Heart right ventricle (tissue), 16 donors: ENCODE measurements at regions of chr21 and their contacts with region 1.

Region 1: DNA sequence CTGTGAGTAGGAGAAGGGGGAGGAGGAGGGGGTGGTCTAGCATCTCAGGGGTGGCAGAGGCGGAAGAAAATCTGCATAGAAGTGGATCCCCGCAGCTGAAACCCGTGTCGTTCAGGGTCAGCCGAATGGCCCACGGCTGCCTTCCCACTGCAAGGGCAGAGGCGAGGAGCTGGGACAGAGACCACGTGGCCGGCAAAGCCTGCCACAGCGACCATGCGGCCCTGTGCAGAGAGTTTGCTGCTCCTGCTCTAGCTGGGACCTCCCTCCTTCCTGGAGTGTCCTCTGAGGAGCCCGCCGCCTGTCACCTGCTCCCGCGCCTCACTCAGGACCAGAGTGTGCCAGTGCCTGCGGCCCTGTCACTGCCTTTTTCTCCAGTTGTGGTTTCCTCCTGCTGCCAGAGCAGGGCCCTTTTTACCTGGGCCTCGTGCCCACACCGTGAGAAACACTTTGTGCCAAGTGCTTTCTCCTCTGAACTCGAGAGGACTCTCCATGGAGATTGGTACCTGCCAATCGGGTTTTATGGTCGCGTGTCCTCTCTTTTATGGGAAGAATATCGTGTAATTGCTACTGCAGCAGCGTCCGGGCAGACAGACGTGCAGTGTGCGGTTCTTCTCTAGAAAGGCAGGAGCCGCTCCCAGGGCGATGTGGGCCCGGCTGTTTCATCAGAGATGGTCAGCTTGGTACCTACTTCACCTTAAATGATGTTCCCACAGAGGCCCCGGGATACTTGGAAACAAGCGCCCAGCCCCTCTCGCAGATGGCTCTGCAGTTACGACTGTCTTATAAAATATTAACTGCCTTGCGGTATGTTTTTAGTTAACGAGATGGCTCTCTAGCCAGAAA is 5.3 kb upstream of the TRPM2 start:
- DNase-seq: no peak
- ATAC-seq: no peak
- H3K4me3 ChIP-seq: no peak overlapping the region
- H3K27ac ChIP-seq: no peak overlapping the region
- H3K4me1 ChIP-seq: peaks cover 0 to 29% (median 0%) of the 10 kb centered on the region in 9 donors
- H3K27me3 ChIP-seq: peaks cover 12 to 62% (median 46%) of the 10 kb centered on the region in 7 donors
- CTCF ChIP-seq: no peak

Region 2: GRCh38 chr21:44423312-44423821 is 75.2 kb after region 1 on chr21:
- intact Hi-C with region 1: no loop called
- DNase-seq: no peak
- ATAC-seq: no peak
- H3K4me3 ChIP-seq: no peak overlapping the region
- H3K27ac ChIP-seq: no peak overlapping the region
- H3K4me1 ChIP-seq: no peaks in the 10 kb centered on the region
- H3K27me3 ChIP-seq: peaks cover 0 to 16% (median 3%) of the 10 kb centered on the region in 7 donors
- CTCF ChIP-seq: no peak

Region 3: DNA sequence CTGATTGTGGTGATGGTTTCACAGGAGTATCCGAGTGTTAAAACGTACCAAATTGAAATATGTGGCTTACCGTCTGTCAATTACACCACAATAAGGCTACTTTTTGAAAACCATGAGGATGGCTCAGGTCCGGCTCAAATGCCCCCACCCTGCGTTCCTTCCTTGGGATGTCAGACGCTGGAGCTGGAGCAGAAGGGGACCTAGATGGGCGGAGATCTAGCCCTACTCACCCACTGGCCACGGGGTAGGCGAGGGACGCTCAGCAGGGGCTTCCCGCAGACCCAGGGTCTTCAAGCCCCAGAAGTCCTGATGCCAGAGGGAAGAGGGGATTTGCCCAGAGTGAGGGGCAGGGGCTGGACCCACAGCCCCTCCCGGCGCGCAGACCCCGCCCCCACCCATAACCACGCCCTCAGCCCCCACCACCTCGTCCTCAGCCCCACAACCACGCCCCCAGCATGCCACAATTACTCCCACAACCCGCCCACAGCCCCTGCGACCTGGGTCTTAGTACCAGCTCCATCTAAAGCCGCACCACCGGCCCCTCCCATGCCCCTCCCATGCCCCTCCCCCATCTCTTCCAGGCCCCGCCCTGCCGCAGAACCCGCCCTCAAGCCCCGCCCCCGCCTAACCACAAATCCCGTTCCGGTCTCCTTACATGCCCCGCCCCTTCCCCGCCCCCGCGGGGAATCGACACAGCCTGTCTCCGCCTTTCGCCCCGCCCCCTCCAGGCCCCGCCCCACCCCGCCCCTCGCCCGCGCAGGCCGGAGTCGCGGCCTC is 106.8 kb after region 1 on chr21 and contains the start of gene LRRC3:
- intact Hi-C with region 1: loop called in 1 of 10 experiments (anchors 10 kb)
- DNase-seq: peak; percentile 82 to 90
- ATAC-seq: peak; percentile 85 to 88 (median 87)
- H3K4me3 ChIP-seq: peak within 1 kb of the TSS; percentile 65 to 89 (median 82)
- H3K27ac ChIP-seq: peak within 1 kb of the TSS in 5 of 10 donors; percentile 10 to 65 (median 47)
- H3K4me1 ChIP-seq: peaks cover 0 to 10% (median 6%) of the 10 kb centered on the region in 9 donors
- H3K27me3 ChIP-seq: peaks cover 0 to 13% (median 3%) of the 10 kb centered on the region in 7 donors
- CTCF ChIP-seq: no peak
- total RNA-seq, gene LRRC3: 1.2 to 3.2 (median 2.1) TPM

Region 4: DNA sequence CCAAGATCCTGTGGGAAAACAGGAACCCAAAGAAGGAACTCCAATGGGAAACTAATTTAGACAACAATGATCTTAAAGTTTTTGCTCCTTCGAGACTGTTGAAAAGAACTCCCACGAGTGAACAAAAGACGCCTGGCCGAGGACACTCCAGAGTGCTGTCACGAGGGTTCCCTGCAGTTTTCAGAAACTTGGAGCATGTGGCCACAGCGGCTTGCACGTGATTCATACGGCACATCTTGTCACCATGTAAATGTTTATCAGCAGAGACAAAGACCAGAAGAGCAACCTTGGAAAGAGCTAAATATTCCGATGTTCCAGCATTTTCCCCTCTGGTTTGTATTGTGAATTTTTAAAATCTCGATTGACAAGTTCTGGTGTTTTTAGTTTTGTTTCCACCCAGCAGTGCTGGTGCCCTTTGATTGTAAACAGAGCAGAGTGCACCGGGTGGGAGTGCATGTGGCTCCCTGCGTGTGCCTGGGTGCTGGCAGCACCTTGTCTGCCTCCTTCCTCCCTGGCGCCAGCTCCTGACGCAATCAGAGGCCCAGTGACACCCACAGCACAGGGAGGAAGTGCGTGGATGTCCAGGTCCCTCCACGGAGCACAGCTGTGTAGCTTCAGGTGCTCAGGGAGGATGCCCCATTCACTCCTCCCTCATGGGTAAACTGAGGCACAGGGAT is 130.1 kb after region 1 on chr21:
- intact Hi-C with region 1: loop called in 2 of 10 experiments (anchors 10 kb)
- DNase-seq: no peak
- ATAC-seq: peak; percentile 43 to 84 (median 68)
- H3K4me3 ChIP-seq: no peak overlapping the region
- H3K27ac ChIP-seq: peak overlapping the region in 3 of 10 donors; percentile 37 to 63 (median 41)
- H3K4me1 ChIP-seq: peaks cover 0 to 24% (median 2%) of the 10 kb centered on the region in 9 donors
- H3K27me3 ChIP-seq: peaks cover 0 to 8% (median 4%) of the 10 kb centered on the region in 7 donors
- CTCF ChIP-seq: no peak

Region 5: GRCh38 chr21:44583089-44583799 is 235.1 kb after region 1 on chr21:
- intact Hi-C with region 1: no loop called
- DNase-seq: no peak
- ATAC-seq: peak in 3 of 8 donors; percentile 66 to 78 (median 71)
- H3K4me3 ChIP-seq: no peak overlapping the region
- H3K27ac ChIP-seq: no peak overlapping the region
- H3K4me1 ChIP-seq: no peaks in the 10 kb centered on the region
- H3K27me3 ChIP-seq: peaks cover 0 to 61% (median 22%) of the 10 kb centered on the region in 7 donors
- CTCF ChIP-seq: no peak